ENCODE measurements at regions of chr12 and their contacts with region 1.

Region 1: DNA sequence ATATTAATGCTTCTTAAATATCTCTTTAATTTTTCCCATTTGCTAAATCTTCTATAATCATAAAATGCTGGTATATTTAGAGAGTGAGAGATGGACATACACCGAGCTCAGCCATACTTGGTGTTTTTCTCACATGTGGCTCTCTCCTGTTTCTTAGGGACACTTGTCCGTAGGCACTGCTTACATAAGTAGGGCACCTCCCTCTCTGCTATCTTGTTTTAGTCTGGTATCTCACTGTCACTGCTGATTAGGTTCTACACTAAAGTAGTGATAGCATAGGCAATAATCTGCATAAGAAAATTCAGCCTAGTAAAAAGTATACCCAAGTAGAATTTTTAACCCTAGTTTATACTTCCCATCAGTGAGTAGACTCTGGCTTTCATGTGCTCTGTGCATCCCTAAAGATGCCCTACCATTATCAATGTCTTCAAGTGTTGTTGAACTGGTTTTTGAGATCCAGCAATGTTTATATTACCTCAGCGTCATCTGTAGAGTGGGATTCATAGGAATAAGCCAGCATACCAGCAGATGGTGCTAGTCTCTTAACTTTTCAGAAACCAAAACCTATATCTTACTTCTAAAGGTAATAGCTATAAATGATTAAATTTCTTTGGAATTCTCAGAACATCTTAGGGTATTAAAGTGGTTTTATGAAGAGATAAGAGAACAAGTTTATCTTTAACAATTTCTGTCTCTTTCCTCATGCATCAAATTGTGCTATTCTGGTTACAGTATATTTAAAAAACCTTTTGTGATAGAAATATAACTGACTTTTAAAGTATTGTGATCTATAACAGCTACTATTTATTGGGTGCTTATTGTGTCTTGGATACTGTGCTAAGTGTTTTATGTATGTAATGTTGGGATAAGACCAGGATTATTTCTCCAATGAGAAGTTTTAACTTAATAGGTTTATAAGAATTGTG is 32.9 kb downstream of the ARID2 start:
- DNase-seq: no peak
- ATAC-seq: peak; percentile 49
- H3K4me3 Mint-ChIP-seq: no peak overlapping the region
- H3K27ac Mint-ChIP-seq: no peak overlapping the region
- H3K4me1 Mint-ChIP-seq: peaks cover 32% of the 10 kb centered on the region
- H3K27me3 Mint-ChIP-seq: no peaks in the 10 kb centered on the region

Region 2: GRCh38 chr12:45388545-45388944 is 373.9 kb before region 1 on chr12:
- CTCF ChIA-PET with region 1: no interaction called
- POLR2A ChIA-PET with region 1: no interaction called
- intact Hi-C with region 1: no loop called
- DNase-seq: no peak
- ATAC-seq: no peak
- H3K4me3 Mint-ChIP-seq: no peak overlapping the region
- H3K27ac Mint-ChIP-seq: no peak overlapping the region
- H3K4me1 Mint-ChIP-seq: no peaks in the 10 kb centered on the region
- H3K27me3 Mint-ChIP-seq: no peaks in the 10 kb centered on the region

Region 3: DNA sequence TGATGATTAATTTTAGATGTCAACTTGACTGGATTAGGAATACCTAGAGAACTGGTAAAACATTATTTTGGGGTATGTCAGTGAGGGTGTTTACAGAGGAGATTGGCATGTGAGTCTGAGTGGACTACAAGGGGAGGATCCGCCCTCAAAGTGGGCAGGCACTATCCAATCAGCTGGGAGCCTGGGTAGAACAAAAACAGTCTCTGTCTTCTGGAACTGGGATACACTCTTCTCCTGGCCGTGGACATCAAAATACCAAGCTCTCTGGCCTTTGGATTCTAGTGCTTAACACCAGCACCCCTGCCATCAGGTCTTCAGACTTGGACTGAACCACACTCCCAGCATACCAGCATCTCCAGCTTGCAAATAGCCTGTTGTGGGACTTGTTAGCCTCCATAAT is 232.3 kb after region 1 on chr12:
- CTCF ChIA-PET with region 1: no interaction called
- POLR2A ChIA-PET with region 1: no interaction called
- intact Hi-C with region 1: no loop called
- DNase-seq: no peak
- ATAC-seq: no peak
- H3K4me3 Mint-ChIP-seq: no peak overlapping the region
- H3K27ac Mint-ChIP-seq: no peak overlapping the region
- H3K4me1 Mint-ChIP-seq: peaks cover 2% of the 10 kb centered on the region
- H3K27me3 Mint-ChIP-seq: no peaks in the 10 kb centered on the region

Region 4: DNA sequence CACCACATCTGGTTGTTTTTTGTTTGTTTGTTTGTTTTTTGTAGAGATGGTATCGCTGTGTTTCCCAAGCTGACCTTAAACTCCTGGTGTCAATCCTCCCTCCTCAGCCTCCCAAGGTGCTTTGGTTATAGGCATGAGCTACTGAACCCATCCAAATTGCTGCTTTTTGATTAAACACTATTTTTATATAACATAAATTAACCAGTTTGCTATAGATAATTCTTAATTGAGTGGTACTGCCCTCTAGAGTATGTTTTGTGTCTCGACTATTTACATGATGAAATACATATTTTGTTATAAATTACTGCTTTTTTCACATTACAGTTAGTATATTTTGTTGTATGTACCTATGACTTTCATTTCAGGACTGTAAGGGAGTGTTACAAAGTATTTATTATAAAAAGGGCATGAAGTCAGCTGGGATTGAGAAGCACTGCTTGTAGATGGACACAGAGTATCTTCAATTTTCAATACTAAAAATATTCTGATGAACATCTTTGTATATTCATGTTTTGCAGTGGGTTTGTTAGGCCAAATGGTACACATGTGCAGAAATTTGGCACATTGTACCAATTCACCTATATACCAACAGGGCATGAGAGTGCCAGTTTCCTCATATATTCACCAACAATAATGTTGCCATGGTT is 242.8 kb after region 1 on chr12:
- CTCF ChIA-PET with region 1: no interaction called
- POLR2A ChIA-PET with region 1: no interaction called
- intact Hi-C with region 1: loop called in 1 of 2 experiments (anchors 2 kb)
- DNase-seq: no peak
- ATAC-seq: no peak
- H3K4me3 Mint-ChIP-seq: no peak overlapping the region
- H3K27ac Mint-ChIP-seq: no peak overlapping the region
- H3K4me1 Mint-ChIP-seq: no peaks in the 10 kb centered on the region
- H3K27me3 Mint-ChIP-seq: no peaks in the 10 kb centered on the region

Measured in activated CD4-positive, alpha-beta T cell treated with anti-CD3 and anti-CD28 coated beads for 36 hours (primary cell).